MCF 10A (cell line): ENCODE measurements at regions of chr1 and their contacts with region 1.

Region 1: DNA sequence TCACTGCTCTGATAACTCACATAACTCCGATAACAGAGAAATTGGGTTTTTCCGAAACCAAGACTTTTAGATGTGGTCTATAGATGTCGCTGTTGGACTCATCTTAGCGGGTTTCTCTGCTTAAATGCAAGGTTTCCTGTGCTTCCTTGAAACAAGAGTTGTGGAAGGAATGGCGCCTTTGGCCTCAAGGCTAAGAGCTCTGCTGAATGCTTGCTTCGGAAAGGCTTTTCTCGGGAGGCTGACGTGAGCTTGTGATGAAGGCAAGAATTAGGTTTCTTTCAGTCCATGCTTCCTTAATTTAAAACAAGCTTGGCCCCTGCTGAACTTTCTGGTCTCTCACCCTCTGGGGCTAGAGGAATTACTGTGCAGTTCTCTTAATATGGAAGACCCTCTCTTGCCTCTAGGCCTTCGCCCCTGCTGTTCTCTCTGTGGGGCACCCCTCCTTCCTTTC is 113.5 kb downstream of the MAP3K21 start:
- DNase-seq: peak; percentile 90
- H3K4me3 Mint-ChIP-seq: no peak overlapping the region
- H3K27ac Mint-ChIP-seq: no peak overlapping the region
- H3K4me1 Mint-ChIP-seq: peaks cover 18% of the 10 kb centered on the region
- H3K27me3 Mint-ChIP-seq: no peaks in the 10 kb centered on the region
- CTCF ChIP-seq: peak; percentile 99

Region 2: DNA sequence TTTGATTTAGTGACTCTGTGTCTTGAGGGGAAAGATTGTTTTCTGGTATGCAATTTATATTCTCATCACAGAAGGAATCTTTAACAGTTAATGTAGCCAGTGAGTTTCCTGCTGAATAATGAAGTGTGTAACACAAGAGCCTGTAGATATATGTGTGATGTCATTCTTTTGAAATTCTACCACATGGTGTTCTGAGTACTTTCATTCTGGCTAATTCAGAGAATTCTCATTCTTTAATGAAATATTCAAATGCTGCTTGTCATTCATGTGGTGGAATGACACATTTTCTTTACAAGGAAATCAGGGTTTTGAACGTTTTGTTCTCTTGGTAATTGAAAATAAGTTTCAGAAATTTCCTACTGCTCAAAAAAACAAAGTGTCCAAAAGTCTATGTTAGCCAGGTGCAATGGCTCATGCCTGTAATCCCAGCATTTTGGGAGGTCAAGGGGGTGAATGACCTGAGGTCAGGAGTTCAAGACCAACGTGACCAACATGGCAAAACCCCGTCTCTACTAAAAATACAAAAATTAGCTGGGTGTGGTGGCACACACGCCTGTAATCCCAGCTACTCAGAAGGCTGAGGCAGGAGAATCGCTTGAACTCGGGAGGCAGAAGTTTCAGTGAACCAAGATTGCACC is 33.9 kb before region 1 on chr1:
- CTCF ChIA-PET with region 1: interaction called, 19 read pairs
- POLR2A ChIA-PET with region 1: no interaction called
- intact Hi-C with region 1: no loop called
- DNase-seq: no peak
- H3K4me3 Mint-ChIP-seq: no peak overlapping the region
- H3K27ac Mint-ChIP-seq: no peak overlapping the region
- H3K4me1 Mint-ChIP-seq: peaks cover 6% of the 10 kb centered on the region
- H3K27me3 Mint-ChIP-seq: no peaks in the 10 kb centered on the region
- CTCF ChIP-seq: no peak

Region 3: DNA sequence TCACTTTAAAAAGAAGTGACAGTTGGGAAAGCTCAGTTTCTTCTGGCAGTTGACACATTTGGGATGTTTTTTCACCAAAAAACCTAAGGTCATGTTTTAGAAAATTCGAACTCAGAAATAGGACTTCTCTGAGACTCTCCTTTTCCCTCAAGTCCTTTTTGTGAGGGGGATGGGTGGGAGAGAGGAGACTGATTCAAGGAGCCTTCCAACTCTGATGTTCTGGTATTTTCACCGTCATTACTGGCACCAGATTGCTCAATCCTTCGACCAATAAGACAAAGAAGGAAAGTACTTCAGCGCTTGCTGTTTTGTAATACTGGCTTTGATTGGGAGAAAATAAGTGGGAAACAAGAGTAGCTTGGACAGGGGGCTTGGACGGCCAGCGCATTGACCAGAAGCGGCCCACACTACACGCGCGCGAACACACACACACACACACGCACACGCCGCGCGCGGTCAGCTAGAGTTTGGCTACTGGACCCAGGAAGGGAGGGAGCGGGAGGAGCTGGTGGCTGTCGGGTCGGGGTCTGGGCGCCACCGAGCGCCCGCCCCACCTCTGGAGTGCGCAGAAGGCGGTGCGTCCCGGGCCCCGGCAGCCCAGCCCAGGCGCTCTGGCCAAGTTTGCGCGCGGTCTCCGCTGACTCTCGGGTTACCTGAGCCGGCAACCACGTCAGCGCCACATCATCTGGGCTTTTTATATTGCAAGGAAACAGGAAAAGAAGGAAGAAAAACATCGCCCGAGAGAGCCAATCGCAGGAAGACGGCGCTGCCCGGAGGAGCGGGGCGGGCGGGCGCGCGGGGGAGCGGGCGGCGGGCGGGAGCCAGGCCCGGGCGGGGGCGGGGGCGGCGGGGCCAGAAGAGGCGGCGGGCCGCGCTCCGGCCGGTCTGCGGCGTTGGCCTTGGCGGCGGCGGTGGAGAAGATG is 172.5 kb after region 1 on chr1 and contains the start of gene KCNK1:
- CTCF ChIA-PET with region 1: interaction called, 12 read pairs
- POLR2A ChIA-PET with region 1: interaction called, 15 read pairs
- intact Hi-C with region 1: loop called (anchors 1 kb)
- DNase-seq: peak; percentile 97
- H3K4me3 Mint-ChIP-seq: peak within 1 kb of the TSS; percentile 88
- H3K27ac Mint-ChIP-seq: peak within 1 kb of the TSS; percentile 96
- H3K4me1 Mint-ChIP-seq: peaks cover 23% of the 10 kb centered on the region
- H3K27me3 Mint-ChIP-seq: peaks cover 12% of the 10 kb centered on the region
- CTCF ChIP-seq: no peak
- total RNA-seq, gene KCNK1: 24.3 and 41.3 TPM in 2 replicates

Region 4: GRCh38 chr1:233679591-233680373 is 238.8 kb after region 1 on chr1:
- CTCF ChIA-PET with region 1: interaction called, 11 read pairs
- POLR2A ChIA-PET with region 1: no interaction called
- intact Hi-C with region 1: no loop called
- DNase-seq: no peak
- H3K4me3 Mint-ChIP-seq: no peak overlapping the region
- H3K27ac Mint-ChIP-seq: no peak overlapping the region
- H3K4me1 Mint-ChIP-seq: peaks cover 16% of the 10 kb centered on the region
- H3K27me3 Mint-ChIP-seq: no peaks in the 10 kb centered on the region
- CTCF ChIP-seq: no peak

Region 5: DNA sequence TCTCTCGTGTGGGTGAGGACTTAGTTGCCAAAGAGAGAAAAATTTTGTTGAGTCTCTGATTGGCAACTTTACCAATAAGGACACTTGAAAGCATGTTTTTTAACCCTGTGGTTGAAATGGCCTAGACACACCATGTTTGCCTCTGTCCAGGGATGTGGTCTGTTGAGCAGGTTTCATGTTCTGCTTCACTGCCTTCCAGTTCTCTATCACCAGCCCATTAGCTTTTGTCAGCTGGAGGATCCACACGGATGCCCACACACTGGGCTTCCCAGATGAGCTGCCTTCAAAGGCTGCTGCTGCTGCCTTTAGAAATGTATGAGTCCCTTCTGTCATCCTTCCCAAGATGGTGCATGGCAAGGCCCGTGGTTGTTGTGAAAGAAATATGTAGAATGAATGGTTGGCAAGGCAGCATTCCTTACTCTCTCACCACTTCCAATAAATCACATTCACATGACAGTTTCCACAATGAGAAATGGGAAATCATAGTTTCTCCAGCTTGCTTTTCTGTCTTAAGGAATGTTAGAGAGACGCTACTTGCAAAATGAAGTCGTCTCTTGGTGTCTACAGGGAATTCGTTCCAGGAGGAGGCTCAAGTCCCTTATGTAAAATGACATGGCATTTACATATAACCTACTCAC is 355.3 kb after region 1 on chr1:
- CTCF ChIA-PET with region 1: interaction called, 230 read pairs
- POLR2A ChIA-PET with region 1: interaction called, 16 read pairs
- intact Hi-C with region 1: loop called (anchors 1 kb)
- DNase-seq: no peak
- H3K4me3 Mint-ChIP-seq: no peak overlapping the region
- H3K27ac Mint-ChIP-seq: no peak overlapping the region
- H3K4me1 Mint-ChIP-seq: no peaks in the 10 kb centered on the region
- H3K27me3 Mint-ChIP-seq: no peaks in the 10 kb centered on the region
- CTCF ChIP-seq: no peak

Region 6: GRCh38 chr1:234102583-234102982 is 661.6 kb after region 1 on chr1:
- CTCF ChIA-PET with region 1: interaction called, 16 read pairs
- POLR2A ChIA-PET with region 1: no interaction called
- intact Hi-C with region 1: no loop called
- DNase-seq: no peak
- H3K4me3 Mint-ChIP-seq: no peak overlapping the region
- H3K27ac Mint-ChIP-seq: no peak overlapping the region
- H3K4me1 Mint-ChIP-seq: no peaks in the 10 kb centered on the region
- H3K27me3 Mint-ChIP-seq: no peaks in the 10 kb centered on the region
- CTCF ChIP-seq: no peak